Prostate gland (tissue), 2 donors: ENCODE measurements at regions of chr2 and their contacts with region 1.

Region 1: DNA sequence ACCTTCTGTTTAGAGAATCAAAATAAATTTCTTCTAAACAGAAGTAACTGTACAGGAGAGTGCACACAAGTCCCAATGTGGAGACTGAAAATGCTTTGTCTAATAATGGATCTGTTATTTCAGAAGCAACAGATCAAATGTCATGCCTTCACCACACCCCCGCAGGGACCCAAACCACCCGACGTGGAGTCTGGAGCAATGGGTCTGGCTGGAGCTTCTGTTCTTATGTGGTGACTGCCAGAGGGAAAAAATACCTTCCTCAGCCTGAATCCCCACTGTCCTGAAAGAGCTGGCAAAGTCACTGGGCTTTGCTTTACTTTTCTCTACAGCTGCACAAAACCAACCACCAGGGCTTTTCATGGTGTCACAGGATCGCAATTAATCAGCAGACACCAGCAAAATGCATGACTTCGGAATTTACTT is 119.0 kb upstream of the ZFP36L2 start:
- DNase-seq: no peak
- H3K4me3 ChIP-seq: no peak overlapping the region
- H3K27ac ChIP-seq: peak overlapping the region; percentile 51 to 53
- H3K4me1 ChIP-seq: peaks cover 7% of the 10 kb centered on the region
- H3K27me3 ChIP-seq: no peaks in the 10 kb centered on the region
- CTCF ChIP-seq: peak in 2 of 4 experiments; percentile 6 to 38
- POLR2A ChIP-seq: no peak

Region 2: GRCh38 chr2:43251171-43251731 is 94.2 kb before region 1 on chr2:
- intact Hi-C with region 1: loop called (anchors 5 kb)
- DNase-seq: peak; percentile 29
- H3K4me3 ChIP-seq: no peak overlapping the region
- H3K27ac ChIP-seq: peak overlapping the region; percentile 65 to 76
- H3K4me1 ChIP-seq: no peaks in the 10 kb centered on the region
- H3K27me3 ChIP-seq: no peaks in the 10 kb centered on the region
- CTCF ChIP-seq: peak in 1 of 4 experiments; percentile 19
- POLR2A ChIP-seq: peak; percentile 15

Region 3: DNA sequence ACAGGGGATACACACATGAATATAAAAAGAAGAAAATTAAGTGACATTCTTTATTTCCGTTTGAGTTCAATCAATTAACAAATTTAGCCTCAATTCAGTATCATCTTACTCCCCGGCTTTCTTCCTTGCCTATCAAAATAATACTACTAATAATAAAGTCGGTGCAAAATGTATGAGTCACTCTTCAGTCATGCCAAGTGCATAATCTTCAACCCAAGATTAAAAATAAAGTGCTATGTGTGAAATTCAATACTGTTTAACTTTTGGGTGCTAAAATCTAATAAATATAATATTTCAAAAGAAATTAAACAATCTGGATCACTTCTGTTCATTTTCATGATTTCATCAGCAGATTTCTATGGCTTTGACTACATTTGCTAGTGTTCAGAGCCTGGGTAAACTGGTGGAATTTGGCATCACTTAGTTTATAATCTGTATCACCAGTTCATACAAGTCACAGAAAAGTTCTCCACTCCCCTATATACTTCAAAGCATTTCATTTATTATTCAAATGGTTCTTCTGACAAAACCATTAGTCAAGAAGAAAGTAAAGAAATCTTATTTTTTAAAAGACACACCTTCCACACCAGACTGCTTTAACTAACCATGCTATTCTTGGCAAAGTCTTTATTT is 66.8 kb after region 1 on chr2:
- intact Hi-C with region 1: loop called (anchors 5 kb)
- DNase-seq: no peak
- H3K4me3 ChIP-seq: no peak overlapping the region
- H3K27ac ChIP-seq: peak overlapping the region in 1 of 2 donors; percentile 8
- H3K4me1 ChIP-seq: peaks cover 14% of the 10 kb centered on the region
- H3K27me3 ChIP-seq: no peaks in the 10 kb centered on the region
- CTCF ChIP-seq: no peak
- POLR2A ChIP-seq: no peak

Region 4: GRCh38 chr2:44107085-44107740 is 761.8 kb after region 1 on chr2:
- intact Hi-C with region 1: no loop called
- DNase-seq: no peak
- H3K4me3 ChIP-seq: no peak overlapping the region
- H3K27ac ChIP-seq: no peak overlapping the region
- H3K4me1 ChIP-seq: peaks cover 2% of the 10 kb centered on the region
- H3K27me3 ChIP-seq: no peaks in the 10 kb centered on the region
- CTCF ChIP-seq: no peak
- POLR2A ChIP-seq: no peak